Sigmoid colon (tissue), 7 donors: ENCODE measurements at regions of chr16 and their contacts with region 1.

Region 1: GRCh38 chr16:30378236-30379204 is 3.8 kb downstream of the SEPTIN1 start:
- DNase-seq: peak; percentile 100
- H3K4me3 ChIP-seq: peak overlapping the region; percentile 51 to 80 (median 73)
- H3K27ac ChIP-seq: peak overlapping the region; percentile 96 to 100 (median 98)
- H3K4me1 ChIP-seq: peaks cover 0 to 23% (median 20%) of the 10 kb centered on the region in 4 donors
- H3K27me3 ChIP-seq: no peaks in the 10 kb centered on the region
- CTCF ChIP-seq: peak in 1 of 4 experiments; percentile 16
- EP300 ChIP-seq: no peak
- POLR2A ChIP-seq: peak; percentile 35 to 76

Region 2: DNA sequence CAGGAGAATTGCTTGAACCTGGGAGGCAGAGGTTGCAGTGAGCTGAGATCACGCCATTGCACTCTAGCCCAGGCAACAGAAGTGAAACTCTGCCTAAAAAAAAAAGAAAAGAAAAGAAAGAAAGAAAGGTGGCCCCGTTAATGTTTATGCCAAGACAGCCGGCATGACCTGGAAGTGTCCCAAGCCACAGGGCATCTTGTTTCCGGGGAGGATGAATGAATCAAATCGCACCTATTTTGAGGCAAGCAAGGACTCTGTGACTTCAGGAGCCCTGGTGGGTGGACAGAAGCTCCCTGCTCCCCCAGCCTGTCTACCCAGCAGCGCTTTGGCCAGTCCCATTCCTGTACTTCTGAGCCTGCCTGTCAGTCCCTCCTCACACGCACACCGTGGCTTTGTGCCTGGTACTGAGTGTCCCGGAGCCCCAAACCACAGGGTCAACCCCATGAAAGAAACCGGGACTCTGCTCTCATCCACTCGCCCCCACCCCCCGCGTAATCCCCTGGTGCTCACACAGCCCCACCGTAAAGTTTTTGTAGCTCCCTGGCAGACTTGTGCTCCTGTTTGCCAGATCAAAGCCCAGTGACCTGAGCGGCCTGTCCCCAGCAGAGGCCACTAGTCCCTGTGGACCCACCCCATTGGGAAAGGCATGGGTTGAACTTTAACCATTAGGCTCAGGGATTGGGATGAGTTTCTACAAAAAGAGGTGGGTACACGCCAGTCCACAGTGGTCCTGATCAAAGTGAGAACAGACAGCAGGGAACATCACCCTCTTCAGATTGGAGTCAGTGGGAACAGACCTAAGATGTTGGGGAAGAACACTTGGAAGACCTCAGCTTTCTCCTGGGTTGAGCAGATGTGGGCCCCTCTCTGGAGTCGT is 42.7 kb before region 1 on chr16:
- intact Hi-C with region 1: no loop called
- DNase-seq: peak; percentile 70
- H3K4me3 ChIP-seq: peak overlapping the region; percentile 69 to 98 (median 72)
- H3K27ac ChIP-seq: peak overlapping the region; percentile 94 to 99 (median 96)
- H3K4me1 ChIP-seq: peaks cover 0 to 7% (median 6%) of the 10 kb centered on the region in 4 donors
- H3K27me3 ChIP-seq: no peaks in the 10 kb centered on the region
- CTCF ChIP-seq: no peak
- EP300 ChIP-seq: no peak
- POLR2A ChIP-seq: no peak

Region 3: GRCh38 chr16:30395155-30395991 is 16.9 kb after region 1 on chr16 and contains the start of gene ZNF48:
- intact Hi-C with region 1: loop called (anchors 2 kb)
- DNase-seq: peak; percentile 94
- H3K4me3 ChIP-seq: peak within 1 kb of the TSS; percentile 73 to 95 (median 84)
- H3K27ac ChIP-seq: peak within 1 kb of the TSS; percentile 85 to 91 (median 86)
- H3K4me1 ChIP-seq: peaks cover 0 to 45% (median 43%) of the 10 kb centered on the region in 4 donors
- H3K27me3 ChIP-seq: no peaks in the 10 kb centered on the region
- CTCF ChIP-seq: peak in 1 of 4 experiments; percentile 23
- EP300 ChIP-seq: no peak
- POLR2A ChIP-seq: no peak
- total RNA-seq, gene ZNF48: 8.1 to 12.8 (median 11.4) TPM

Region 4: DNA sequence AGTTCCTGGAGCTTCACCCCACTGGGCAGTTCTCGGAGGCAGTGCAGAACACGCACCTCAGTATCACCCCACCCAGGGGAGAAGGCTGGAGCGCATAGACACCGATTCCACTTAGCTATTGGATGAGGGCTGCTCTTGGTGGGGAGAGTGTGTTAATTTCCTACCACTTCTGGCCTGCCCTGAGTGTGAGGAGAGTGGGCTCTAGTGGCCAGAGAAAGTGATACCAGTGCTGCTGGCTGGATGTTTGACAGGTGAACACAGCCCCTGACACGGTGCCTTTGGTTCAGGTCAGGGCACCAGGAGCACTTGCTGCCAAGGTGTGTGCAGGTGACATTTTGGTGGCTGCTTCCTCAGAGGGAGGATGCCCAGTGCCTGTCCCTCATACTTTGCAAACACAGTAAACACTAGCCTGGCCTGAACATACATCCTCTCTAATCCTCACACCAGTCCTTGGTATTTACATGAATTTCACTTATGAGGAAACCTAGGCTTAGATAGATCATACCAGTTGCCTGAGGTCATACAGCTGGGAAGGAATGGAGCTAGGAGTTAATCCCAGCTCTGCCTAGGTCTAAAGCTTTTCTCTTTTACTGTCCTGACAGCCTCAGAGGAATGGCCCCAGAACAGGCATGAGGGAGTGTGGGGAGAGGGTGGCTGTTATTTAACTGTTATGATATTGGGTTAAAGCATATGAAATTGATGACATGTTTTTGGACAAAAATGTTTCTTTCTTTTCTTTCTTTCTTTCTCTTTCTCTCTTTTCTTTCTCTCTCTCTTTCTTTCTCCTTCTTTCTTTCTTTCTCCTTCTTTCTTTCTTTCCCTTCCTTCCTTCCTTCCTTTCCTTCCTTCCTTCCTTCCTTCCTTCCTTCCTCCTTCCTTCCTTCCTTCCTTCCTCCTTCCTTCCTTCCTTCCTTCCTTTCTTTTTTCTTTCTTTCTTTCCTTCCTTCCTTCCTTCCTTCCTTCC is 955.4 kb after region 1 on chr16:
- intact Hi-C with region 1: no loop called
- DNase-seq: peak; percentile 53
- H3K4me3 ChIP-seq: no peak overlapping the region
- H3K27ac ChIP-seq: no peak overlapping the region
- H3K4me1 ChIP-seq: peaks cover 0 to 6% (median 2%) of the 10 kb centered on the region in 4 donors
- H3K27me3 ChIP-seq: peaks cover 7 to 86% (median 40%) of the 10 kb centered on the region in 3 donors
- CTCF ChIP-seq: no peak
- EP300 ChIP-seq: no peak
- POLR2A ChIP-seq: no peak